ENCODE measurements at regions of chr1 and their contacts with region 1.

Region 1: GRCh38 chr1:159891275-159892157 is 8.4 kb downstream of the CFAP45 start:
- DNase-seq: peak; percentile 65
- ATAC-seq: peak; percentile 97
- H3K4me3 ChIP-seq: no peak overlapping the region
- H3K27ac ChIP-seq: no peak overlapping the region
- H3K4me1 ChIP-seq: no peaks in the 10 kb centered on the region
- H3K27me3 ChIP-seq: peaks cover 0 to 3% of the 10 kb centered on the region in 2 experiments; a peak in 1 of 5 replicates
- CTCF ChIP-seq: peak; percentile 82
- EP300 ChIP-seq: no peak
- POLR2A ChIP-seq: no peak
- RAD21 ChIP-seq: peak; percentile 82

Region 2: DNA sequence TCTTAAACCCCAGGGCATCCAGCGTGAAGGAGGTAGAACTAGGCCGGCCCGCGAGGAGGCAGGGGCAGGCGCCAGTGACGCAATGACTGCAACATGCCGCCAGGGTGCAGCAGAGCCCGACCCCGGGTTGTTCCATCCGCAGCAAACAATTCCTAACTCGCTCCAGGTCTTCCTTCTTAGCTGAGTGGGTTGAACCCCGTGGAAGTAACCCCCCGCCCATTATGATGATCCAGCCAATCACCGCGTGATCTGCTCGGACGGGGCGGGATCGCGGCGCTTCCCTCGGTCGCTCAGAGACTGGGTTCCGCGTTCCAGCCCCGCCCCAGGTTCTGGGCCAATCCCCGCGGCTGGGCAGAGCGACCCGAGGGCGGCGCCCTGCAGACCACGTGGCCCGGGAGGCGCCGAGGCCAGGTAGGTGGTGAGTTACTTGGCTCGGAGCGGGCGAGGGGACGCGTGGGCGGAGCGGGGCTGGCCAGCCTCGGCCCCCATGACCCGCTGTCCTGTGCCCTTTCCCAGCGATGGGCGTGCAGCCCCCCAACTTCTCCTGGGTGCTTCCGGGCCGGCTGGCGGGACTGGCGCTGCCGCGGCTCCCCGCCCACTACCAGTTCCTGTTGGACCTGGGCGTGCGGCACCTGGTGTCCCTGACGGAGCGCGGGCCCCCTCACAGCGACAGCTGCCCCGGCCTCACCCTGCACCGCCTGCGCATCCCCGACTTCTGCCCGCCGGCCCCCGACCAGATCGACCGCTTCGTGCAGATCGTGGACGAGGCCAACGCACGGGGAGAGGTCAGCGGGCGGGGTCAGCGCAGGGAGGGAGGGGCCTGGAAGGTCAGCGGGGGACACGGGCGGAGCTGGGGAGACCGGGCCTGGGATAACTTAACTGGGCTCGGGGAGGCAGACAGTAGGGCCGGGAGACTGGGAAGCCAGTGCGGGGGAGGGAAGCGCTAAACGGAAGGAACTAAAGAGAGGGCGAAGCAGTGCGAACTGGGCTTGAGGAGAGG is 110.6 kb before region 1 on chr1 and contains the start of gene DUSP23:
- CTCF ChIA-PET with region 1: interaction called, 7 read pairs
- POLR2A ChIA-PET with region 1: no interaction called
- in situ Hi-C with region 1: no loop called
- intact Hi-C with region 1: loop called (anchors 1 kb)
- DNase-seq: peak; percentile 4
- ATAC-seq: peak; percentile 93
- H3K4me3 ChIP-seq: no peak within 1 kb of the TSS
- H3K27ac ChIP-seq: no peak within 1 kb of the TSS
- H3K4me1 ChIP-seq: no peaks in the 10 kb centered on the region
- H3K27me3 ChIP-seq: no peaks in the 10 kb centered on the region
- CTCF ChIP-seq: peak; percentile 82
- EP300 ChIP-seq: no peak
- POLR2A ChIP-seq: no peak
- RAD21 ChIP-seq: 0 out of 2 replicates have a peak, but pooled peaks have one; percentile 13
- total RNA-seq, gene DUSP23: not detected in 2 replicates

Region 3: GRCh38 chr1:159798893-159799292 is 92.6 kb before region 1 on chr1:
- CTCF ChIA-PET with region 1: interaction called, 28 read pairs
- POLR2A ChIA-PET with region 1: no interaction called
- in situ Hi-C with region 1: loop called (anchors 5 kb)
- intact Hi-C with region 1: loop called (anchors 1 kb)
- DNase-seq: peak; percentile 70
- ATAC-seq: peak; percentile 93
- H3K4me3 ChIP-seq: no peak overlapping the region
- H3K27ac ChIP-seq: no peak overlapping the region
- H3K4me1 ChIP-seq: no peaks in the 10 kb centered on the region
- H3K27me3 ChIP-seq: peaks cover 5 to 7% of the 10 kb centered on the region in 2 experiments; a peak in 2 of 5 replicates
- CTCF ChIP-seq: peak; percentile 62
- EP300 ChIP-seq: no peak
- POLR2A ChIP-seq: no peak
- RAD21 ChIP-seq: peak; percentile 47; the same call in 1 of the 2 replicates

Region 4: DNA sequence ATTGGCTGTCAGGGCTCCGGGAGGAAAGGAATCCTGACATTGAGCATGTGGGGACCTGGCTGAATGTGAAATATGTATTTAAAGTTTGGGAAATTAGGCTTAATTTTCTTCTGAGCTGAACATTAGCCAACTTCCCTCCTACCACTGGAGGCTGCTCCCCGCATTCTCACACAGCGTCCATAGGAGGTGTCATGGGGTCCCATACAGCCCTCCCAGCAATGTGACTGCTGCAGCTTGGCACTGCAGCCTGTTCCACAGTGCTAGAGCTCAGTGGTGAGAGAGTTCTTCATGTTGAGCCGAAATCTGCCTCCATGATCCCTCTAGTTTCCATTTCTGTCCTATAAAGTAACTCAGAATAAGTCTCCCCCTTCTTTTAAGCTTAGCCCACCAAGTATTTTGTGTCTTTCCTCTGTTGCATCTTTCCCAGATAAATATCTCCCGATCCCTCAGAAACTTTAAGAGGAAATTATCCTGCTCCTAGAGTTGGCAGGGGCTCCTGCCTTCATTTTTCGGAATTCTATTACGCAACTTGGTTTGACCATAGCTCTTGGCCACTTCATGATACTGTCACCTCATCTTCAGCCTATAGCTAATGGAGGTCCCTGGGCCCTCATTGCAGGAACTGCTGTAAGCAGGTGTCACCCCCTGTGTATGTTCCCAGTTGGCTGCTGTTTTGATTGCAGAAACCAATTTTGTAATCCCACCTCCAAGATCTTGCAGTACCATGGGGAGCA is 87.4 kb before region 1 on chr1:
- CTCF ChIA-PET with region 1: interaction called, 28 read pairs
- POLR2A ChIA-PET with region 1: no interaction called
- in situ Hi-C with region 1: loop called (anchors 5 kb)
- intact Hi-C with region 1: loop called (anchors 1 kb)
- DNase-seq: no peak
- ATAC-seq: no peak
- H3K4me3 ChIP-seq: no peak overlapping the region
- H3K27ac ChIP-seq: no peak overlapping the region
- H3K4me1 ChIP-seq: no peaks in the 10 kb centered on the region
- H3K27me3 ChIP-seq: peaks cover 4 to 7% of the 10 kb centered on the region in 2 experiments; a peak in 3 of 5 replicates
- CTCF ChIP-seq: no peak
- EP300 ChIP-seq: no peak
- POLR2A ChIP-seq: no peak
- RAD21 ChIP-seq: no peak

Measured in HepG2 (cell line).